ENCODE measurements at regions of chr3 and their contacts with region 1.

Region 1: GRCh38 chr3:140953028-140953960 is 11.7 kb downstream of the SLC25A36 start:
- DNase-seq: peak in 1 of 2 experiments; percentile 59
- H3K4me3 ChIP-seq: no peak overlapping the region
- H3K27ac ChIP-seq: peak overlapping the region; percentile 22
- H3K4me1 ChIP-seq: peaks cover 29% of the 10 kb centered on the region
- H3K27me3 ChIP-seq: no peaks in the 10 kb centered on the region
- CTCF ChIP-seq: no peak

Region 2: DNA sequence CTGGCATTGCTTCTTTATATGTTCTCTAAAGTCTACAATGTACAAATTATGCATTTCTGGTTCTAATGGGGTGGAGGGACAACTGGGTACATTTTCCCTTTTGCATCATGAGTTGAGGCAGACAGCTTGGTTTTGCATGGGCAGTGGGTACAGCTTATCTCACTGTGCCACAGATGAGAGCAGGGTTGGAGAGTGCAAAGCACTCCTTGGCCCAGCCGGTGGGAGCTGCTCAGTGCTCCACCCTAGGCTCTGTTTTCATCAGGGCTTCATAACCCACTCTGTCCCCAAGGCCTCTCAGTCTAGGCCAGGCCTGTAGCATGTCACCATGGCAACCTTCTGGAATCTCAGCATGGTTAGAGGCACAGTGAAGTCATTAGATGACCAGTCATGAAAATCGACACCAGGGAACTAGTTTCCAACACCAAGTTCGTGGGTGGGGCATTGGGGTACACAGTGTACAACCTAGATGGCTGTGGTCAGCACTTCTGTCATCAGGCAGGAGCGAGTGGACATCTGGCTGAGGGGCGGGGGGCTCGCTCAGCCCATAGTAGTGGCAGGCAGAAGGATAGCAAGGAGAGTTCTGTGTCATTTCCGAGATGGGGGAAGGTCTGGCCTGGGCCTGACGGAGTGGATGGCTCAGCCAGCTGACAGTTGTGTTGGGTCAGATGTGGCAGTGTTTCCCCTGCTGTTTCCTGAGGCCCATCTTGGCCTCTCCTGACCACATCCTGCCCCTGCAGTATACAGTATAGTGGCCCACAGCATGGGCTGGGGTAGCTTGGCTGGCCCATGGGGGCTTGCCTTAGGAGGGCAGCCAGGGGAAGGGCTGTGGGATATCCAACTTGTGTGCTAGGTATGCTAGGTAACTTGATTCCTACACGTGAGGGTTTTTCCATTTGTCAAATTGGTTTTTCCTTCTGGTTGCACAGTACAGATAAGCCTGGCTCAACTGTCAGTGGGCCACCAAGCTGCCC is 1832.9 kb before region 1 on chr3:
- CTCF ChIA-PET with region 1: interaction called, 16 read pairs
- POLR2A ChIA-PET with region 1: no interaction called
- intact Hi-C with region 1: no loop called
- DNase-seq: no peak
- H3K4me3 ChIP-seq: no peak overlapping the region
- H3K27ac ChIP-seq: no peak overlapping the region
- H3K4me1 ChIP-seq: no peaks in the 10 kb centered on the region
- H3K27me3 ChIP-seq: no peaks in the 10 kb centered on the region
- CTCF ChIP-seq: no peak

Region 3: GRCh38 chr3:140941434-140942220 is 11.7 kb before region 1 on chr3 and contains the start of gene SLC25A36:
- CTCF ChIA-PET with region 1: no interaction called
- POLR2A ChIA-PET with region 1: no interaction called
- intact Hi-C with region 1: no loop called
- DNase-seq: peak; percentile 96
- H3K4me3 ChIP-seq: peak within 1 kb of the TSS; percentile 76
- H3K27ac ChIP-seq: peak within 1 kb of the TSS; percentile 77
- H3K4me1 ChIP-seq: peaks cover 18% of the 10 kb centered on the region
- H3K27me3 ChIP-seq: no peaks in the 10 kb centered on the region
- CTCF ChIP-seq: no peak
- total RNA-seq, gene SLC25A36: 76.5 and 90.1 TPM in 2 replicates

Region 4: DNA sequence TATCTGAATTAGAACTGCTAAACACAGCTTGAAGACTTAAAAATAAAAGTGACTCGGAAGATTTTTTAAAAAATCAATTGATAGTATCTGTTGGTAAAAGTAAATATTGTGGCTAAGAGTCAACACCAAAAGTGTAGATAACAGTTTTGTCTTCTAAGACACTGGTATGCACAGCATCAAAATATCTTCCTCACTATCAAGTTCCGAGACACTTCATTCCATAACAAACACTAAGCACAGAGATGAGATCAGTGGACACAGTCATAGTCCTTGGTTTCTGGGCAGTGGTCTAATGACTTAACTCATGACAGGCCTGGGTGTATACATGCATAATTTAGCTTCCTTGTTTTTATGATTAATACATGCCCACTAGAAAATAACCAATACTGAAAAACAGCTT is 341.6 kb after region 1 on chr3:
- CTCF ChIA-PET with region 1: no interaction called
- POLR2A ChIA-PET with region 1: no interaction called
- intact Hi-C with region 1: no loop called
- DNase-seq: peak in 1 of 2 experiments; percentile 79
- H3K4me3 ChIP-seq: no peak overlapping the region; the same call in 1 of the 2 replicates
- H3K27ac ChIP-seq: peak overlapping the region; percentile 48
- H3K4me1 ChIP-seq: peaks cover 11% of the 10 kb centered on the region; the same call in 1 of the 2 replicates
- H3K27me3 ChIP-seq: no peaks in the 10 kb centered on the region
- CTCF ChIP-seq: no peak

Region 5: GRCh38 chr3:142148792-142149672 is 1195.7 kb after region 1 on chr3 and contains the start of gene TFDP2:
- CTCF ChIA-PET with region 1: interaction called, 14 read pairs
- POLR2A ChIA-PET with region 1: no interaction called
- intact Hi-C with region 1: no loop called
- DNase-seq: peak; percentile 59 to 88
- H3K4me3 ChIP-seq: peak within 1 kb of the TSS; percentile 91
- H3K27ac ChIP-seq: peak within 1 kb of the TSS; percentile 16; the same call in 1 of the 2 replicates
- H3K4me1 ChIP-seq: peaks cover 11% of the 10 kb centered on the region
- H3K27me3 ChIP-seq: no peaks in the 10 kb centered on the region
- CTCF ChIP-seq: no peak
- total RNA-seq, gene TFDP2: 48.2 and 57.6 TPM in 2 replicates

Measured in PC-9 (cell line).